K562 (cell line): ENCODE measurements at regions of chr12 and their contacts with region 1.

Region 1: GRCh38 chr12:100229058-100229637 is 28.5 kb downstream of the ACTR6 start:
- DNase-seq: peak in 2 of 4 experiments; percentile 40 to 64
- ATAC-seq: peak; percentile 91
- H3K4me3 ChIP-seq: no peak overlapping the region
- H3K27ac ChIP-seq: no peak overlapping the region
- H3K4me1 ChIP-seq: no peaks in the 10 kb centered on the region
- H3K27me3 ChIP-seq: no peaks in the 10 kb centered on the region
- CTCF ChIP-seq: peak; percentile 50 to 61 (median 50)
- EP300 ChIP-seq: no peak
- POLR2A ChIP-seq: no peak
- RAD21 ChIP-seq: peak; percentile 36 to 67; a peak in 3 of 4 replicates

Region 2: GRCh38 chr12:99810718-99811593 is 418.2 kb before region 1 on chr12:
- CTCF ChIA-PET with region 1: no interaction called
- POLR2A ChIA-PET with region 1: no interaction called
- in situ Hi-C with region 1: no loop called
- intact Hi-C with region 1: loop called (anchors 10 kb)
- DNase-seq: no peak
- ATAC-seq: no peak
- H3K4me3 ChIP-seq: no peak overlapping the region
- H3K27ac ChIP-seq: no peak overlapping the region
- H3K4me1 ChIP-seq: no peaks in the 10 kb centered on the region
- H3K27me3 ChIP-seq: no peaks in the 10 kb centered on the region
- CTCF ChIP-seq: peak in 1 of 3 experiments; percentile 23; a peak in 1 of 6 replicates
- EP300 ChIP-seq: no peak
- POLR2A ChIP-seq: no peak
- RAD21 ChIP-seq: no peak

Region 3: DNA sequence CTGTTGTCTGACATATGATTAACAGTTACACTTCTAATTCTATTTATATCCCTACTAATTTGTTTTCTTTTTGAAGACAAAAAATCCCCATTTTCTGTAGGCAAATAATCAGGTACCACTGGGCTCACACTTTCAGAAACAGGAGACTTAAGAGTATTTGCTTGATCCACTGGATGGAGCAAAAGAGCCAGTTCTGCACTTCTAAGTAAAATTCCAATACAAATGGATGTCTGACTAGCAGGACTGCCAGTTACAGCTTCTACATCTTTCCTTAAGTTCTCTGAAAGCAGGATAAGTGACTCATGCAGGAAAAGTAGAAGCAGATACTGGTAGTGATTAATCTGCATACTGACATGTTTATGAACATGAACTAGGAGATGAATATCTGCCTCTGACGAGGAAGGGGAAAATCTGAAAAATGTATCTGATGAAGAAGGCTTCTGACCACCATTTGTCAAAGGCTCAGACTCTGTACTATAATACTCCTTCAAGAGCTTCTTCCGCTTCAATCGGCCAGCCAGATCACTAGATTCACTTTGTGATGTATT is 170.6 kb before region 1 on chr12:
- CTCF ChIA-PET with region 1: no interaction called
- POLR2A ChIA-PET with region 1: no interaction called
- in situ Hi-C with region 1: no loop called
- intact Hi-C with region 1: loop called (anchors 5 kb)
- DNase-seq: peak in 2 of 4 experiments; percentile 9 to 14
- ATAC-seq: no peak; the same call in 2 of the 3 replicates
- H3K4me3 ChIP-seq: no peak overlapping the region
- H3K27ac ChIP-seq: no peak overlapping the region
- H3K4me1 ChIP-seq: peaks cover 0 to 7% of the 10 kb centered on the region in 2 experiments; a peak in 1 of 5 replicates
- H3K27me3 ChIP-seq: no peaks in the 10 kb centered on the region
- CTCF ChIP-seq: peak in 1 of 3 experiments; percentile 13; a peak in 1 of 6 replicates
- EP300 ChIP-seq: no peak
- POLR2A ChIP-seq: no peak
- RAD21 ChIP-seq: peak; percentile 21 to 35; a peak in 3 of 4 replicates

Region 4: DNA sequence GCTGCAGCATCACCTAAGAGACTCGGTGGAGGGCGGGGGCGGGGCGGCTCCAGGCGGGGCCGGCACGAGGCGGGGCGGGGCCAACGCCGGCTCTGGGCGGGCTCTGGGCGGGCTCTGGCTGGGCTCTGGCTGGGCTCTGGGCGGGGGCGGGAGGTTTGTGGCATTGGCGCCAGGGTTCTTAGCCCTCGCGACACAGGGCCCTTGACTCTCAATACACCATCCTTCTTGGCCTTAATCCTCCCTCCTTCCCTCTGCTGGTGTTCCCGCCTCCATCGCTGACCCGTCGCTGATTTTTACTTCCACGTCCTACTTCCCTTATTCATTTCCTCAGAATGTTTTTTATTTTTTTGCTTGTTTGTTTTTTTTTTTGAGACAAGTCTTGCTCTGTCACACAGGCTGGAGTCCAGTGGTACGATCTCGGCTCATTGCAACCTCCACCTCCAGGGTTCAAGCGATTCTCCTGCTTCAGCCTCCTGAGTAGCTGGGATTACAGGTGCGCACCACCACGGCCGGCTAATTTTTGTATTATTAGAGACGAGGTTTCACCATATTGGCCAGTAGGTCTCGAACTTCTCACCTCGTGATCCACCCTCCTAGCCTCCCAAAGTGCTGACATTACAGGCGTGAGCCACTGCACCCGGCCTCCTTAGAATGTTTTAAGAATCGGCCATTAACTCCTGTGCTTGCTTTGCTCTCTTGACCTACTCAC is 86.1 kb before region 1 on chr12 and contains the start of gene BLTP3B:
- CTCF ChIA-PET with region 1: no interaction called
- POLR2A ChIA-PET with region 1: no interaction called
- in situ Hi-C with region 1: no loop called
- intact Hi-C with region 1: loop called (anchors 5 kb)
- DNase-seq: peak; percentile 90 to 94 (median 91)
- ATAC-seq: peak; percentile 93
- H3K4me3 ChIP-seq: peak within 1 kb of the TSS; percentile 97
- H3K27ac ChIP-seq: peak within 1 kb of the TSS; percentile 71
- H3K4me1 ChIP-seq: peaks cover 15 to 18% of the 10 kb centered on the region in 2 experiments; a peak in 4 of 5 replicates
- H3K27me3 ChIP-seq: no peaks in the 10 kb centered on the region
- CTCF ChIP-seq: no peak
- EP300 ChIP-seq: no peak
- POLR2A ChIP-seq: peak; percentile 83
- RAD21 ChIP-seq: no peak
- polyA plus RNA-seq, gene BLTP3B: 3.9 to 5.0 TPM

Region 5: DNA sequence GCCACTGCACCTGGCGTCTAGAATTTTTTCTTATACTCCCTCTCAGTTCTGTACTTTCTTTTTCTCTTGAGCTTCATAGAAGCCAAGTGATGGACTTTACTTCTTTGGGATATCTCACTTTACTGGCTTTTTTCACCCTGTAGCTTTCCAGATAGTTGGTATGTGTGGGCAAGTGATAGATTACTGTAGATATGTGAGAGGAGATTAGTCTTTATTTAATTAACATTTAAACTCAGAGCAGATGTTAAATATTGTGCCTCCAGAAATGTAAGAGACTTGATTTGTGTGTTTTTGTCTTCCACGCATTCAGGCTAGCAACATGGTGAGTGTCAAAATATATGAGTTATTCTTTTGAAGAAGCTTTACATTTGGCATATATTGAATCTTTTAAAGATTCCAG is 88.2 kb after region 1 on chr12:
- CTCF ChIA-PET with region 1: no interaction called
- POLR2A ChIA-PET with region 1: no interaction called
- in situ Hi-C with region 1: no loop called
- intact Hi-C with region 1: no loop called
- DNase-seq: no peak
- ATAC-seq: no peak
- H3K4me3 ChIP-seq: no peak overlapping the region
- H3K27ac ChIP-seq: no peak overlapping the region
- H3K4me1 ChIP-seq: no peaks in the 10 kb centered on the region
- H3K27me3 ChIP-seq: no peaks in the 10 kb centered on the region
- CTCF ChIP-seq: no peak
- EP300 ChIP-seq: no peak
- POLR2A ChIP-seq: no peak
- RAD21 ChIP-seq: no peak